ENCODE measurements at regions of chr17 and their contacts with region 1.

Region 1: DNA sequence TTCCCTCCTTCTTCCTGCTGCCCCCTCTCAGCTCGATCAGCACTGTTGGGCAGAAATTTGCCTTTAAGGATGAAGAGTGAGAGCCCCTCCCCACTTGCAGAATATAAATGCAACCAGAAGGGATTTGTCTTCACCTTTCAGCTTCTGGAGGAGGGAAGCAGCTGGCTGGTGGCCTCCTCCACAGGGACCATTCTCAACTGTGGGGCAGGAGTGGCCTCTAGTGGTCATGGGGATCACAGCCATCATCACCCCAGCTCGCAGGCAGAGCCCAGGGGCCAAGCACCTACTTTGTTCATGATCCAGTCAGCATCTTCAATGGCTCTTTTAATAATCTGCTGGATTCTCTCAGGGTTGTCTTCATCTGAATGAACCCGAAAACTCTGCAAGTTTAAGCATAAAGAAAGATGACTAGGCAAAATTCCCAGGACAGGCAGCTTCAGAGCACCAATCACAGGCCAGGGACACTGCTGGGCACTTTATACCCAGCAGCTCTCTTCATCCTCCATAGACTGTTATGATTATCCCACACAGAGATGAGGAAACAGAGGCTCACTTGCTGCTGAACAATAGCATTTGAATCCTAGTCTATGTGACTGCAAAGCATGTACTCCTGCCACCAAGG is 13.1 kb downstream of the LYRM9 start:
- DNase-seq: peak; percentile 83
- H3K4me3 Mint-ChIP-seq: no peak overlapping the region
- H3K27ac Mint-ChIP-seq: no peak overlapping the region
- H3K4me1 Mint-ChIP-seq: peaks cover 26% of the 10 kb centered on the region
- H3K27me3 Mint-ChIP-seq: peaks cover 5% of the 10 kb centered on the region

Region 2: GRCh38 chr17:27760069-27760885 is 119.8 kb before region 1 on chr17:
- CTCF ChIA-PET with region 1: interaction called, 180 read pairs
- DNase-seq: peak; percentile 79
- H3K4me3 Mint-ChIP-seq: no peak overlapping the region
- H3K27ac Mint-ChIP-seq: no peak overlapping the region
- H3K4me1 Mint-ChIP-seq: no peaks in the 10 kb centered on the region
- H3K27me3 Mint-ChIP-seq: peaks cover 6% of the 10 kb centered on the region

Region 3: GRCh38 chr17:27892866-27893769 is 13.0 kb after region 1 on chr17 and contains the start of gene LYRM9:
- CTCF ChIA-PET with region 1: interaction called, 28 read pairs
- DNase-seq: peak; percentile 93
- H3K4me3 Mint-ChIP-seq: peak within 1 kb of the TSS; percentile 72
- H3K27ac Mint-ChIP-seq: peak within 1 kb of the TSS; percentile 75
- H3K4me1 Mint-ChIP-seq: peaks cover 16% of the 10 kb centered on the region
- H3K27me3 Mint-ChIP-seq: peaks cover 21% of the 10 kb centered on the region

Region 4: DNA sequence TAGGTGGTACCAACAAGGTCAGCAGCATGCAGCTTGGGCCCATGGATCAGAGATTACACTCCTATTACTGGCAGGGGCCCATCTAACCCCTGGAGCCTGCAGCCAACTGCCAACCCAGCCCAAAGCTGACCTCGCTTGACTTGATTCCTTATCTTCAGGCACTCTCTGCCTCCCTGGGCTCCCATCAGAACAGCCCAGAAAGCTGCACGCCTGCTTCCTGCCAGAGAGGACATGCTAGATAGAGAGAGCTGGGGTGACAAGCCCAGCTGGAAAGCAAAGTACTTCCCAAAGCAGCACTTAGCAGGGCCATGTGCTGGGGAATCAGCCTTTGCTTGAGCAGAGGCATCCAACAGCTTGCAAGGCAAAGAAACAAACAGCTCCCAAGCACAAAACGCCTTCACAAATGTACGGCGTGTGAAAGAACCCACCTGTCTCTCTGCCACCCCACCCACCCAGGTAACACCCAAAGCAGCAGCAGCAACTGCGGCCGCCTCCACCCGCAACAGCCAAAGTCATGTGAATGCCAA is 88.2 kb after region 1 on chr17:
- CTCF ChIA-PET with region 1: no interaction called
- DNase-seq: no peak
- H3K4me3 Mint-ChIP-seq: no peak overlapping the region
- H3K27ac Mint-ChIP-seq: no peak overlapping the region
- H3K4me1 Mint-ChIP-seq: no peaks in the 10 kb centered on the region
- H3K27me3 Mint-ChIP-seq: peaks cover 10% of the 10 kb centered on the region